Common myeloid progenitor, CD34-positive (primary cell): ENCODE measurements at regions of chr2 and their contacts with region 1.

Region 1: GRCh38 chr2:149597668-149598326 is 10.2 kb upstream of the MMADHC start:
- DNase-seq: peak; percentile 71 to 87 (median 82)
- H3K4me3 ChIP-seq: peak overlapping the region in 4 of 7 experiments; percentile 15 to 60 (median 42)
- H3K27ac ChIP-seq: no peak overlapping the region
- H3K4me1 ChIP-seq: peaks cover 4 to 9% (median 4%) of the 10 kb centered on the region in 4 experiments
- H3K27me3 ChIP-seq: peaks cover 0 to 2% (median 0%) of the 10 kb centered on the region in 5 experiments

Region 2: GRCh38 chr2:149622343-149622742 is 24.5 kb after region 1 on chr2:
- CTCF ChIA-PET with region 1: no interaction called
- POLR2A ChIA-PET with region 1: no interaction called
- DNase-seq: no peak
- H3K4me3 ChIP-seq: no peak overlapping the region
- H3K27ac ChIP-seq: no peak overlapping the region
- H3K4me1 ChIP-seq: no peaks in the 10 kb centered on the region
- H3K27me3 ChIP-seq: no peaks in the 10 kb centered on the region

Region 3: GRCh38 chr2:149767516-149767974 is 169.7 kb after region 1 on chr2:
- CTCF ChIA-PET with region 1: no interaction called
- POLR2A ChIA-PET with region 1: no interaction called
- DNase-seq: no peak
- H3K4me3 ChIP-seq: no peak overlapping the region
- H3K27ac ChIP-seq: no peak overlapping the region
- H3K4me1 ChIP-seq: no peaks in the 10 kb centered on the region
- H3K27me3 ChIP-seq: no peaks in the 10 kb centered on the region

Region 4: GRCh38 chr2:151238527-151239487 is 1641.0 kb after region 1 on chr2:
- CTCF ChIA-PET with region 1: interaction called, 17 read pairs
- POLR2A ChIA-PET with region 1: no interaction called
- DNase-seq: peak; percentile 73 to 88 (median 87)
- H3K4me3 ChIP-seq: no peak overlapping the region
- H3K27ac ChIP-seq: no peak overlapping the region
- H3K4me1 ChIP-seq: no peaks in the 10 kb centered on the region
- H3K27me3 ChIP-seq: no peaks in the 10 kb centered on the region